Activated T-helper 2 cell treated with anti-CD3 and anti-CD28 coated beads, Interferon-gamma antibody, Interleukin-2, Interleukin-4, amounts not matched to agents 10 μg/mL and 5 μg/mL and 100 μg/mL, durations not matched to agents 14 hours and 24 hours and 36 hours (primary cell): ENCODE measurements at regions of chr10 and their contacts with region 1.

Region 1: GRCh38 chr10:110871298-110872084 is at the start of gene PDCD4:
- DNase-seq: peak; percentile 94
- H3K4me3 Mint-ChIP-seq: peak within 1 kb of the TSS; percentile 91
- H3K27ac Mint-ChIP-seq: peak within 1 kb of the TSS; percentile 97
- H3K4me1 Mint-ChIP-seq: peaks cover 46% of the 10 kb centered on the region
- H3K27me3 Mint-ChIP-seq: no peaks in the 10 kb centered on the region
- total RNA-seq, gene PDCD4: 60.4 and 67.7 TPM in 2 replicates

Region 2: GRCh38 chr10:110304780-110305421 is 566.6 kb before region 1 on chr10 and contains the start of gene SMNDC1:
- intact Hi-C with region 1: loop called (anchors 10 kb)
- DNase-seq: peak; percentile 97
- H3K4me3 Mint-ChIP-seq: peak within 1 kb of the TSS; percentile 93
- H3K27ac Mint-ChIP-seq: peak within 1 kb of the TSS; percentile 94
- H3K4me1 Mint-ChIP-seq: peaks cover 37% of the 10 kb centered on the region
- H3K27me3 Mint-ChIP-seq: no peaks in the 10 kb centered on the region
- total RNA-seq, gene SMNDC1: 40.2 and 43.1 TPM in 2 replicates

Region 3: GRCh38 chr10:110495731-110496552 is 375.5 kb before region 1 on chr10:
- intact Hi-C with region 1: no loop called
- DNase-seq: peak; percentile 40
- H3K4me3 Mint-ChIP-seq: peak overlapping the region; percentile 97
- H3K27ac Mint-ChIP-seq: peak overlapping the region; percentile 84
- H3K4me1 Mint-ChIP-seq: peaks cover 38% of the 10 kb centered on the region
- H3K27me3 Mint-ChIP-seq: no peaks in the 10 kb centered on the region

Region 4: DNA sequence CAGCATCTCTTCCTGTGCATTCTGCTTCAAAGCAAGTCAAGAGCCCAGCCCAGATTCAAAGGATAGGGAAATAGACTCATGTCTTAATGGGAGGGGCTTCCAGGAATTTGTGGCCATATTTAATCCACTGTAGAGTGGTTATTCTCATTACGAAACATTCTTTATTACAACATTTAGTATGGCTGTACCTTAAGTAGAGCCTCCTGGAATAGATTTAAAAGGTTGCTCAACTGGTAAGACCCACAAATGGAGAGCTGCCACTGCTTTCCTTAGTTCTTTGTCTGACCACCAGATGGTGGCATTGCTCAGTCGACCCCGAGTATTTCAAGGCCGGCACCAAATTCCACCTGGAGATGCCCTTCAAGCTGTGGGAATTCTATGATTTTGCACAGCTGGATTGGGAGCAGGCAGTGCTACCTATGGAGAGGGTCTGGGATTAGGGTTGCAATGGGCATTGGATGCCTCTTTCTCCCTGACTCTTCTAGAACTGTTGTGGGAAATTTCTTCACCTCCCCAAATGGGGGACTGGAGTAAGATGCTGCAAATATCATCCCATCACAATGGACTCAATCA is 125.2 kb before region 1 on chr10:
- intact Hi-C with region 1: loop called (anchors 5 kb)
- DNase-seq: peak; percentile 27
- H3K4me3 Mint-ChIP-seq: no peak overlapping the region
- H3K27ac Mint-ChIP-seq: no peak overlapping the region
- H3K4me1 Mint-ChIP-seq: peaks cover 43% of the 10 kb centered on the region
- H3K27me3 Mint-ChIP-seq: no peaks in the 10 kb centered on the region

Region 5: GRCh38 chr10:110803830-110804338 is 67.6 kb before region 1 on chr10:
- intact Hi-C with region 1: loop called (anchors 5 kb)
- DNase-seq: no peak
- H3K4me3 Mint-ChIP-seq: no peak overlapping the region
- H3K27ac Mint-ChIP-seq: peak overlapping the region; percentile 39
- H3K4me1 Mint-ChIP-seq: peaks cover 34% of the 10 kb centered on the region
- H3K27me3 Mint-ChIP-seq: no peaks in the 10 kb centered on the region

Region 6: GRCh38 chr10:110918643-110919363 is 47.3 kb after region 1 on chr10 and contains the start of gene BBIP1:
- intact Hi-C with region 1: loop called (anchors 1 kb)
- DNase-seq: no peak
- H3K4me3 Mint-ChIP-seq: peak within 1 kb of the TSS; percentile 94
- H3K27ac Mint-ChIP-seq: peak within 1 kb of the TSS; percentile 93
- H3K4me1 Mint-ChIP-seq: peaks cover 39% of the 10 kb centered on the region
- H3K27me3 Mint-ChIP-seq: no peaks in the 10 kb centered on the region
- total RNA-seq, gene BBIP1: 31.5 and 32.7 TPM in 2 replicates